ENCODE measurements at regions of chr19 and their contacts with region 1.

Region 1: GRCh38 chr19:9621156-9622037 is at the start of gene ZNF561:
- DNase-seq: peak; percentile 52
- H3K4me3 ChIP-seq: peak within 1 kb of the TSS; percentile 99
- CTCF ChIP-seq: no peak

Region 2: GRCh38 chr19:9584073-9584833 is 37.1 kb before region 1 on chr19 and contains the start of gene ZNF121:
- CTCF ChIA-PET with region 1: interaction called, 15 read pairs
- POLR2A ChIA-PET with region 1: no interaction called
- DNase-seq: no peak
- H3K4me3 ChIP-seq: peak within 1 kb of the TSS; percentile 94
- CTCF ChIP-seq: no peak

Region 3: DNA sequence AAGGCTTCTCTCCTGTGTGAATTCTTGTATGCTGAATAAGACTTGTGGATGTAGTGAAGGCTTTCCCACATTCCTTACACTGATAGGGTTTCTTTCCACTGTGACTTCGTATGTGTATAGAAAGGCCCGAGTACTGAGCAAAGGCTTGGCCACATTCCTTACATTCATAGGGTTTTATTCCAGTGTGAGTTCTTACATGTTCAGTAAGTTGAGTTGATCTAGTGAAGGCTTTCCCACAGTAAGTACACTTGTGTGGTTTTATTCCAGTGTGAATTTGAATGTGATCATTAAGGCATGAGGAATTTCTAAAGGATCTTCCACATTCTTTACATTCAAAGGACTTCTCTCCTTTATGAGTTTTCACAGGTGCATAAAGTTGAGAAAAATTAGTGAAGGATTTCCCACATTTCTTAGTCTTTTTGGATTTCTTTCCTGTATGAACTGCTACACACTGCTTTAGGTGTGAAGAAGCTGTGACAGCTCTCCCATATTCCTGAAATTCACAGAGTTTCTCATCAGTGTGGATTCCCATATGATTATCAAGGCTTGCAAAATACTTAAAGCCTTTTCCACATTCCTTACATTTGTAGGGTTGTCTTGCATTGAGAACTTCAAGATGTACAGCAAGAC is 10.8 kb before region 1 on chr19:
- CTCF ChIA-PET with region 1: interaction called, 16 read pairs
- POLR2A ChIA-PET with region 1: no interaction called
- DNase-seq: no peak
- H3K4me3 ChIP-seq: no peak overlapping the region
- CTCF ChIP-seq: no peak

Region 4: DNA sequence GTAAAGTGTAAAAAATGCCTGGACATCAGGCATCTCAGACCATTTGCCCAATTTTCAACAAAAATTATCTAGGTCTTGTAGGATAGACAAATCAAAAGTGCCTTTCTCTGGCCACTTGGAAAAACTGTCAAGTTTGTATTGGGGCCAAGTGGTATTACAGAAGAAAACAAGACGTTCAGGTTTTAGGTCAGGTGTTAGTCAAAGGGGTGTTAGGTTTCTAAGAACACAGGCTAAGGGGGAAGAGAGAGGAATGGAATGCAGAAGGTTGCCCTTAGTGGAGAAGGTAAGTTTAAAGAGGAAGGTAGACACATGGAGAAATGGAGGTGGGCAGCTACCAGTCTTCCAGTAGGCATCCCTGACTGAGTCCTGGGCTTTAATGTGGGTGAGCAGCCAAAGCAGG is 19.6 kb after region 1 on chr19:
- CTCF ChIA-PET with region 1: interaction called, 14 read pairs
- POLR2A ChIA-PET with region 1: no interaction called
- DNase-seq: no peak
- H3K4me3 ChIP-seq: no peak overlapping the region
- CTCF ChIP-seq: no peak

Region 5: DNA sequence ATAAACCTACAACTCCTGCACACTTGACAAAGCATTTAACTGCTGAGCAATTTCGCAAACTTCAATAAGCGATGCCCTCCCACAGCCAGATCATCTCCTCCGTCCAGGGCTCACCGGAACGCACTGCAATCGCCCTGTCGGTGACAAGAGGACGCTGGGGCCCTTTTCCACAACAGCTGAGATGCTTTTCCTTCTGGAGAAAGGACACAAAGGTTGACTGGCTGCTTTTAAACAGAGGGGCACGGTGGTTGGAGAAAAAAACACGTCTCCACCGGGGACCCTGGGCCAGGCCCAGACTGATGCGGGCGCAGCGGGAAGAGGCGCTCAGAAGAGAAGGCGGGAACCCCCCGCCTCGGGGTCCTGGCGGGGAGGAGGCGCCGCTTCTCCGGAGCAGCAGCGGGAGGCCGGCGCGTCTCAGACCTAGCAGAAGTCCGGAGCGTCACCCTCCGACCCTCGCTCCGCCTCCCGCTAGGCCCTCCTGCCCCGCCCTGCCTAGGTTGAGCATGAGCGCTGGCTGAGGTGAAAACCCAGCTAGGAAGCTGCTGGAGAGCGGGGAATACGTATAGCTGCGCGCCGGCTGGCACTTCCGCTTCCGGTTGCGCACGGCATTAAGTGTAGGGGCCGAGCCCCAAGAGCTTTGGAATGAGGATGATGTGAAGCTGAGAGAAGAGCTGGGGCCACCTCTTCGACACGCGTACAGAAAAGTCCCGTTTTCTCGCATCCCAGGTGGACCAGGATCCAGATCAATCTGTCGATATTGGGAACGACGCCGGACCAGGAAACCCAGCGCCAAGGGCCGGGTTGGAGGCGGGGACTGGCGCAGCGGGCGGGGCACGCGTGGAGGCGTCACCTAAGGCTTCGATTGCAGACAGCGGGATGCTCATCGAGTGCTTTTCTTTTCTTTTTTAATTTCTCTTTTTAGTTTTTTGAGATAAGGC is 147.0 kb after region 1 on chr19 and contains the start of gene ZNF846:
- CTCF ChIA-PET with region 1: interaction called, 12 read pairs
- POLR2A ChIA-PET with region 1: no interaction called
- DNase-seq: peak; percentile 63
- H3K4me3 ChIP-seq: peak within 1 kb of the TSS; percentile 76
- CTCF ChIP-seq: no peak

Region 6: GRCh38 chr19:9786342-9786741 is 164.9 kb after region 1 on chr19:
- CTCF ChIA-PET with region 1: interaction called, 40 read pairs
- POLR2A ChIA-PET with region 1: no interaction called
- DNase-seq: no peak
- H3K4me3 ChIP-seq: peak overlapping the region; percentile 94
- CTCF ChIP-seq: no peak

Region 7: DNA sequence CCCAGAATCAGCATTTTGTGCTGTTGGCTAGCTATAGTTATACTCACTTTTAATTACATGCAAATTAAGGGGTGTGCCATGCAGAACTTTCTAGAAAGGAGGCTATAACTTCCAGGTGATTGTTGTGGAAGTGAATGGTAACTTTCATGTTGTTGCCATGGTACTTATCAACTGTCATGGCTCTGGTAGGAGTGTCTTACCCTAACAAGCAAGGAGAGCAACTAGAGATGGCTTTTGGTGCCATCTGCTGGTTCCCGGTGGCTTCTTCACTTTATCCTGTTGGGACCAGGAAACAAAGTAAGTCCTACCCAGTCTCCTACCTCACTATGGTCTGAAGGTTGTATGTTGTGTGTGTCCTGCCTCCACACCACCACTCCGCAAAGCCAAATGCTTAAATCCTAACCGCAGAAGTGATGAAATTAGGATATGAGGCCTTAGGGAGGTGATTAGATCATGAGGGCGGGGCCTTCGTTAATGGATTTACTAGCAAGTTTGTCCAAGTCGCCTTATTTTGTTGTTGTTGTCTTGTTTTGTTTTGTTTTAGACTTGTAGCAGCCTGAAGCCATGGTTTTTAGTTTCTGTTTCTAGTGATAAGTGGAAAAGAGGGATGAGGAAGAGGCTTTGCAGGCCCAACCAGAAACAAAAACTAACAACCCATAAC is 174.8 kb after region 1 on chr19:
- CTCF ChIA-PET with region 1: interaction called, 45 read pairs
- POLR2A ChIA-PET with region 1: no interaction called
- DNase-seq: peak; percentile 64
- H3K4me3 ChIP-seq: no peak overlapping the region
- CTCF ChIP-seq: peak; percentile 74